Spleen (tissue), 13 donors: ENCODE measurements at regions of chr19 and their contacts with region 1.

Region 1: GRCh38 chr19:15555759-15556633 is 47.7 kb downstream of the CYP4F22 start:
- DNase-seq: peak; percentile 97
- H3K4me3 ChIP-seq: peak overlapping the region; percentile 15 to 70 (median 34)
- H3K27ac ChIP-seq: peak overlapping the region; percentile 13 to 81 (median 61)
- H3K4me1 ChIP-seq: peaks cover 6 to 27% (median 21%) of the 10 kb centered on the region in 6 donors
- H3K27me3 ChIP-seq: peaks cover 0 to 58% (median 6%) of the 10 kb centered on the region in 7 donors
- CTCF ChIP-seq: peak; percentile 54 to 92 (median 79)
- POLR2A ChIP-seq: no peak

Region 2: DNA sequence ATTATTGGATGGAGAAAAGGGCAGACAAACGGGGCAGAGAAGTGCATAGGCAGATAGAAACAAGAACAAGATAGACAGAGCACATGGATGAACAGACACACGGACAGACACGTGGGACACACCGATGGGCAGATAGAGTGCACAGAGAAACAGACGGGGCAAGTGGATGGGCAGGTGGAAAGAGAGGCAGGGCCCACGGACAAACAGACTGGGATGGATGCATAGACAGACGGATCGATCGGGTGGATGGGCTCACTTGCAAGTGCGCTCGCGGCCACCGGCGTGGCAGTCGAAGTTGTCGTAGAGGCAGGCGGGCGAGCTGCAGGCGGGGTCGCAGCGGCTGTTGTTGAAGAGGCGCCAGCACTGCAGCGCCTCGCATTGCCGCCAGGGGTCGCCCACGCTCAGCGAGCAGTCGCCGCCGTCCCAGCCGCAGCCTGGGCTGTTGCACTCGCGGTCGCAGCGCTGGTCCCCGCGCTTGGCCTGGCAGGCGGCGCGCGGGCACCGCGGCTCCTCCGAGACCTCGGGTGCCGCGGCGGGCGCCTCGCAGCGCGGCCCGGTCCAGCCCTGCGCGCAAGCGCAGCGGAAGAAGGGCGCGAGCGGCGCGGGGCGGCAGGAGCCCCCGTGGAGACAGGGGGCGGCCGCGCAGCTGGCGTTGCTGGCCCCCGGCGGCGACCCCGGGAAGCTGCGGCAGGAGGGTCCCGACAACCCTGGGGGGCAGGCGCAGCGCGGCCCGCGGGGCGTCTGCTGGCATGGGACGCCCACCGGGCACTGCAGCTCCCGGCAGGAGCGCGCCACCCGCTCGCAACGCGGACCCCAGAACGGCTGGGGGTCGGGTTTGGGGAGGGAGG is 378.5 kb before region 1 on chr19:
- intact Hi-C with region 1: loop called (anchors 5 kb)
- DNase-seq: peak; percentile 97
- H3K4me3 ChIP-seq: peak overlapping the region in 4 of 8 donors; percentile 1 to 53 (median 20)
- H3K27ac ChIP-seq: no peak overlapping the region
- H3K4me1 ChIP-seq: peaks cover 0 to 17% (median 7%) of the 10 kb centered on the region in 6 donors
- H3K27me3 ChIP-seq: peaks cover 0 to 39% (median 10%) of the 10 kb centered on the region in 7 donors
- CTCF ChIP-seq: peak; percentile 90 to 99 (median 97)
- POLR2A ChIP-seq: no peak

Region 3: DNA sequence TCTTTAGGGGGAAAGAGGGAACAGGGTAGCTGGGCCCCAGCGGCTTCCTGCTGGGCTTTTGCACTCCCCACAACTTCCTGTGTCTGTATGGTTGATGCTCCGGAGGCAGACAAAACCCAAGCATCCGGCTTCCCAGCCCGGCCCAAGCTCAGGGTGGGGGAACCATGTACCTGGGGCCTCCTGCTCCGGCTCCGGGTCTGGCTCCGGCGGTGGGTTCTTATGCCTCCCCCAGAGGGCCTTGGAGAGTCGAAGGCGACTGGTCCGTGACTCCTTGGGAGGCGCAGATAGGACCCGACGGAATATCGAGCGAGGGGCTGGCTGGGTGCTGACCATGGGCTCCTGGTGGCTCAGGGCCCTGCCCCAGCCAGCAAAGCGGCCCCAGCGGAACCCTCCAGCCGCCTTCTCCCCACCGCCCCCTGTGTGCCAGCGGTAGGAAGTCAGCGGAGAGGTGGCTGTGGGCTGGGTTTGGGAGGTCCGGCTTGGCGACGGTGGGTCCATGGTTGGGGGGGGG is 92.1 kb before region 1 on chr19:
- intact Hi-C with region 1: no loop called
- DNase-seq: peak; percentile 95
- H3K4me3 ChIP-seq: peak overlapping the region; percentile 55 to 94 (median 66)
- H3K27ac ChIP-seq: peak overlapping the region; percentile 89 to 98 (median 91)
- H3K4me1 ChIP-seq: peaks cover 17 to 83% (median 54%) of the 10 kb centered on the region in 6 donors
- H3K27me3 ChIP-seq: peaks cover 0 to 20% (median 4%) of the 10 kb centered on the region in 7 donors
- CTCF ChIP-seq: peak in 1 of 11 experiments; percentile 4
- POLR2A ChIP-seq: no peak

Region 4: GRCh38 chr19:15609261-15609660 is 53.3 kb after region 1 on chr19:
- intact Hi-C with region 1: no loop called
- DNase-seq: no peak
- H3K4me3 ChIP-seq: no peak overlapping the region
- H3K27ac ChIP-seq: no peak overlapping the region
- H3K4me1 ChIP-seq: no peaks in the 10 kb centered on the region
- H3K27me3 ChIP-seq: peaks cover 0 to 26% (median 0%) of the 10 kb centered on the region in 7 donors
- CTCF ChIP-seq: no peak
- POLR2A ChIP-seq: no peak